T-cell (primary cell): ENCODE measurements at regions of chr12 and their contacts with region 1.

Region 1: GRCh38 chr12:76621582-76622024 is 62.0 kb upstream of the OSBPL8 start:
- DNase-seq: peak; percentile 26 to 85 (median 60)
- ATAC-seq: peak; percentile 67 to 83 (median 77)
- H3K4me3 ChIP-seq: no peak overlapping the region
- H3K4me3 Mint-ChIP-seq: no peak overlapping the region
- H3K27ac ChIP-seq: no peak overlapping the region
- H3K27ac Mint-ChIP-seq: no peak overlapping the region
- H3K4me1 ChIP-seq: no peaks in the 10 kb centered on the region
- H3K4me1 Mint-ChIP-seq: peaks cover 4 to 7% (median 5%) of the 10 kb centered on the region in 3 donors
- H3K27me3 ChIP-seq: no peaks in the 10 kb centered on the region
- H3K27me3 Mint-ChIP-seq: peaks cover 0 to 2% of the 10 kb centered on the region in 2 donors

Region 2: DNA sequence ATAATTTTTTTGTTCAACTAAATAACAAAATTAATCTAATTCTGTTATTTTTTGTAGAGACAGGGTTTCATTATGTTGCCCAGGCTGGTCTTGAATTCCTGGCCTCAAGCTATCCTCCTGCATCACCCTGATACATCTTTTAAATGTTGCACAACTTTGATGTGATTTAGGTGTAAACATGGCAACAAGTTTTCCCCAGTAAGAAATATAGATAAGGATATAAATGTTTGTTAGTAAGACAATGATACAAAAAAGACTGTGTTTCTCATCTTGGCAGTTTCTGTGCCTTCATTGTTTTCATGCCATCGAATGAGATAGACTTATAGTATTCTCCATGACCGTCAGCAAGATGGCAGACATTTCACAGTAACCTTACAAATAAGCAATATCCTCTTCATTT is 17.5 kb before region 1 on chr12:
- CTCF ChIA-PET with region 1: interaction called in 1 of 2 experiments, 11 read pairs
- POLR2A ChIA-PET with region 1: no interaction called
- DNase-seq: no peak
- ATAC-seq: no peak
- H3K4me3 ChIP-seq: no peak overlapping the region
- H3K4me3 Mint-ChIP-seq: no peak overlapping the region
- H3K27ac ChIP-seq: no peak overlapping the region
- H3K27ac Mint-ChIP-seq: no peak overlapping the region
- H3K4me1 ChIP-seq: no peaks in the 10 kb centered on the region
- H3K4me1 Mint-ChIP-seq: no peaks in the 10 kb centered on the region
- H3K27me3 ChIP-seq: no peaks in the 10 kb centered on the region
- H3K27me3 Mint-ChIP-seq: peaks cover 0 to 2% of the 10 kb centered on the region in 2 donors

Region 3: DNA sequence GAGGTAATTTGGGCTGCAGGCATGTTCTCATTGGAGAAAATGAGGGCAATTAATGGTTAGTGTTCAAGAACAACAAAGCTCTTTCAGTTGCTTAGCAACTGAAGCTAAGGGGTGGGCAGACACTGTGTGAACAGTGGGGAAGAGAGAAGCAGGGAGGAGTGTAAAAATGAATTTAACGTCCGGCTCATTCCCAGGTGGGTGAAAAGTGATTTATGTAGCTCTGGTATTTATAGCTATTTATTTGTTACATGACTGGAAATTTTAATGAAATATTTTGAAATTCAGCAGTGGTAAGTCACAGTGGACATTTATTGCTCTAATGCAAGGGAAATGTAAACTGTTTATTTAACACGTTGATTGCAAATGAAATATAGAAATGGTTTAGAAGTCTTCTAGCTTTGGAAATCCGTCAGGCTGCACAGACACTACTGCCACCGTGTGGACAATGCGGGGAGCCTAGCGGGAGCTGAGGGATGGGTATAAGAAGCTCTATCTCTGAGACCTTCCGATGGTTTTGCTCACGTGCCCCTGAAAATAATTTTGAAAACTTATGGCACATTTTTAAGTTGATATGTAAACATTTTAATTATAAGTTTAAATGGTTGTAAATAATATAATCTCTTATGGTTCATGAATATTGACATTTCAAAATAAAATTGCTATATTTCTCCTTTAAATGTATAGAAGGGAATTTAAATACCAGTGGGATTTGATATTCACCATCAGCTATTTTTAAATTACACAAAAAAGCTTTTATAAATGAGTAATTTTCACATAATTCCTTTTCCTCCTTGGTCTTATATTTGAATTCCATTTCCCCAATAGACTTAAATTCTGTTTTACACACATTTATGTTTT is 389.3 kb after region 1 on chr12:
- CTCF ChIA-PET with region 1: interaction called, 8 to 36 read pairs
- POLR2A ChIA-PET with region 1: no interaction called
- DNase-seq: peak in 33 of 35 experiments; percentile 20 to 70 (median 46)
- ATAC-seq: peak; percentile 65 to 79 (median 74)
- H3K4me3 ChIP-seq: no peak overlapping the region
- H3K4me3 Mint-ChIP-seq: peak overlapping the region in 1 of 3 donors; percentile 47
- H3K27ac ChIP-seq: no peak overlapping the region
- H3K27ac Mint-ChIP-seq: no peak overlapping the region
- H3K4me1 ChIP-seq: no peaks in the 10 kb centered on the region
- H3K4me1 Mint-ChIP-seq: peaks cover 6 to 7% (median 6%) of the 10 kb centered on the region in 3 donors
- H3K27me3 ChIP-seq: peaks cover 0 to 3% of the 10 kb centered on the region in 2 experiments
- H3K27me3 Mint-ChIP-seq: peaks cover 10 to 12% of the 10 kb centered on the region in 2 donors